ENCODE measurements at regions of chr7 and their contacts with region 1.

Region 1: DNA sequence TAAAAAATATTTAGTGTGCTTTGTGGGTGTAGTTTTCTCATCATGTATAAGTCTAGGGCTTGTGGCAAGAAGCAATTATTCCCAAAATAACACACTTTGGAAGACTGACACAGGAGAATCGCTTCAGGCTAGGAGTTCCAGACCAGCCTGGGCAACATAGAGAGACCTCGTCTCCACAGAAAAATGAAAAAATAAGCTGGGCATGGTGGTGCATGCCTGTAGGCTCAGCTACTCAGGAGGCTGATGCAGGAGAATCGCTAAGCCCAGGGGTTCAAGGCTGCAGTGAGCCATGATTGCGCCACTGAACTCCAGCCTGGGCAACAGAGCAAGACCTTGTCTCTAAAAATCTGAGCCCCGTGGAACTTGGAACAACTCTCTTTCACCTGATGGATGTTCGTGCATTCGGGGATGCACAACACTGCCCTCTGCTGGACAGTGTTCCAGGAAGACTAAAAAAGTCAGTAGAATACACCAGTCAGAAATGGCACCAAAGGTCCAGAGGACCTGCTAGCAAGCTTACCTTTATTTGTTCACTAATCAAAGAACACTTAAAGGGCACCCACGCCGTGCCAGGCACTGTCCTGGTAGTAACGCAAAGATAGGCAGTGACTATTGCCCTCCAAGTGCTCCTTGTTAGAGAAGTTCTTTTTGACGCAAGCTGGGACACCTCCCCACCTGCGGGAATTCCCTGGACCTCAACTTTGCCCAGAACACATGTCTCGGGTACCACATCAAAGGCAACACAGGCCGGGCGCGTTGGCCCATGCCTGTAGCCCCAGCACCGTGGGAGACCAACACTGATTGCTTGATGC is 81.9 kb upstream of the CALN1 start:
- DNase-seq: peak; percentile 41 to 68 (median 63)
- ATAC-seq: no peak
- H3K4me3 ChIP-seq: no peak overlapping the region
- H3K27ac ChIP-seq: no peak overlapping the region
- H3K4me1 ChIP-seq: no peaks in the 10 kb centered on the region
- H3K27me3 ChIP-seq: no peaks in the 10 kb centered on the region

Region 2: GRCh38 chr7:71752171-71752935 is 741.7 kb before region 1 on chr7:
- intact Hi-C with region 1: loop called in 1 of 4 experiments (anchors 10 kb)
- DNase-seq: peak; percentile 30 to 76 (median 61)
- ATAC-seq: peak; percentile 64 to 72
- H3K4me3 ChIP-seq: no peak overlapping the region
- H3K27ac ChIP-seq: no peak overlapping the region
- H3K4me1 ChIP-seq: no peaks in the 10 kb centered on the region
- H3K27me3 ChIP-seq: no peaks in the 10 kb centered on the region

Measured in right cardiac atrium (tissue), 5 donors.